Panc1 (cell line): ENCODE measurements at regions of chr10 and their contacts with region 1.

Region 1: DNA sequence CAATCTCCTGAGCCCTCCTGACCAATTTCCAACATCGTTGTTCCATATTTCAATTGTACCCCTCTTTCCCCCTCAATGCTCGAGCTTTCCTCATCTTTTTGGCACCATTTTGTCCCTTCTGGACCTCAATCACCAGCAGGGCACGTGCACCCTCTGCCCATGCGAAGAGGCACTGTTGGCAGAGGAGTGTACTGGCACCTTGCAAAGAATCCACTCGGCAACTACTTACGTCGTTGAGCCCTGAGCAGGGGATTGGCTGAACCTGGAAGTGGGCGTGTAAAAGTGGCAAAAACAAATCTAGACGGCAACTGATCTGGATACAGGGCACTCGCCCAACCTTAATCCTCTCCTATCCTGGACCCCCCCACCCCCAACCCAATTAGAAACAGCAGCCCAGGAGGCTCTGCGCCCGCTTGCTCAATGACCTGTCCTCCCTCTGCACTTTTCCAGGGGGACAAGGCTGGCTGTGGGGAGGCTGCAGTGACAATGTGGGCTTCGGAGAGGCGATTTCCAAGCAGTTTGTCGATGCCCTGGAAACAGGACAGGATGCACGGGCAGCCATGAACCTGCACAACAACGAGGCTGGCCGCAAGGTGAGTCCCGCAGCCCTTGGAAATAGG is 18.8 kb downstream of the WNT8B start:
- DNase-seq: peak; percentile 96
- ATAC-seq: peak; percentile 98
- H3K4me3 ChIP-seq: peak overlapping the region; percentile 44 to 63
- H3K27ac ChIP-seq: no peak overlapping the region
- H3K4me1 ChIP-seq: no peaks in the 10 kb centered on the region; the same call in 1 of the 2 replicates
- H3K27me3 ChIP-seq: peaks cover 29% of the 10 kb centered on the region
- CTCF ChIP-seq: no peak

Region 2: GRCh38 chr10:100496567-100496966 is 15.0 kb after region 1 on chr10:
- CTCF ChIA-PET with region 1: interaction called, 10 read pairs
- POLR2A ChIA-PET with region 1: no interaction called
- in situ Hi-C with region 1: no loop called
- intact Hi-C with region 1: no loop called
- DNase-seq: no peak
- ATAC-seq: no peak
- H3K4me3 ChIP-seq: no peak overlapping the region
- H3K27ac ChIP-seq: no peak overlapping the region
- H3K4me1 ChIP-seq: no peaks in the 10 kb centered on the region
- H3K27me3 ChIP-seq: no peaks in the 10 kb centered on the region
- CTCF ChIP-seq: no peak